PC-3 (cell line): ENCODE measurements at regions of chr1 and their contacts with region 1.

Region 1: GRCh38 chr1:48356901-48357300 is 115.1 kb downstream of the SPATA6 start:
- DNase-seq: peak; percentile 4
- ATAC-seq: no peak
- H3K4me3 ChIP-seq: no peak overlapping the region
- H3K27ac ChIP-seq: no peak overlapping the region
- H3K4me1 ChIP-seq: no peaks in the 10 kb centered on the region
- H3K27me3 ChIP-seq: no peaks in the 10 kb centered on the region
- CTCF ChIP-seq: peak; percentile 26; the same call in 1 of the 2 replicates

Region 2: GRCh38 chr1:48402599-48402998 is 45.7 kb after region 1 on chr1:
- CTCF ChIA-PET with region 1: no interaction called
- POLR2A ChIA-PET with region 1: no interaction called
- intact Hi-C with region 1: loop called (anchors 2 kb)
- DNase-seq: no peak
- ATAC-seq: no peak
- H3K4me3 ChIP-seq: no peak overlapping the region
- H3K27ac ChIP-seq: no peak overlapping the region
- H3K4me1 ChIP-seq: no peaks in the 10 kb centered on the region
- H3K27me3 ChIP-seq: no peaks in the 10 kb centered on the region
- CTCF ChIP-seq: no peak

Region 3: GRCh38 chr1:48450505-48450904 is 93.6 kb after region 1 on chr1:
- CTCF ChIA-PET with region 1: interaction called, 4 read pairs
- POLR2A ChIA-PET with region 1: no interaction called
- intact Hi-C with region 1: loop called (anchors 2 kb)
- DNase-seq: peak; percentile 26
- ATAC-seq: peak; percentile 69
- H3K4me3 ChIP-seq: no peak overlapping the region
- H3K27ac ChIP-seq: no peak overlapping the region
- H3K4me1 ChIP-seq: no peaks in the 10 kb centered on the region
- H3K27me3 ChIP-seq: no peaks in the 10 kb centered on the region
- CTCF ChIP-seq: peak; percentile 57

Region 4: DNA sequence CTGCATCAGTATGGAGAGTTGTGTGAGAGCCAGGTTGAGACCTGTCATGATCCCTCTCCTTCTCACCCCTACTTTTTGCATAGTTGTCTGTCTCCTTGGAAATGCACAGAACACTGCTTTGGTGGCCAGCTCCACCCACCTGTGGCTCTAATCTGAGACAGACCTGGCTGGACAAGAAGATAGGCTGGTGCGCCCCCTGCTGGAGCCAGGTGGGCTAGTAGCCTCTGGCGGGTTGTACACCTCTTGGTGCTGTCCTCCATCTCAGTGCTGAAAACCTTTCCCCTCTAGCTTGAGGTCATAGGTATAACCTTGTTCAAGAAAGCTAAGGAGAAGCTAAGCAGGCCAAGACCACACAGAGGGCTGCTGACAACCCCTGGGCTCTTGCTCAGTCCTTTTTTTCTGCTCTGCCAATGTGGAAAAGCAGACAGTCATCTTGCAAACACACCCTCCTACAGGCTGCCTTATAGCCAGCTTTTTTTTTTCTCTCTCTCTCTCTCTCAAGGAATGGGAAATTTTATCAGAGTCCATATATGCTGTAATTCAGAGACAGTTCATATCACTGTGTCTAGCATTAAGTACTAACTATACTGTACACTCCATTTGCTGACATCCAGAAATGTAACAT is 173.9 kb after region 1 on chr1:
- CTCF ChIA-PET with region 1: no interaction called
- POLR2A ChIA-PET with region 1: no interaction called
- intact Hi-C with region 1: loop called (anchors 1 kb)
- DNase-seq: peak; percentile 81
- ATAC-seq: peak; percentile 37
- H3K4me3 ChIP-seq: no peak overlapping the region
- H3K27ac ChIP-seq: no peak overlapping the region
- H3K4me1 ChIP-seq: peaks cover 16% of the 10 kb centered on the region
- H3K27me3 ChIP-seq: 0 out of 2 replicates have a peak, but pooled peaks cover 10% of the 10 kb centered on the region
- CTCF ChIP-seq: peak; percentile 93